ENCODE measurements at regions of chr5 and their contacts with region 1.

Region 1: DNA sequence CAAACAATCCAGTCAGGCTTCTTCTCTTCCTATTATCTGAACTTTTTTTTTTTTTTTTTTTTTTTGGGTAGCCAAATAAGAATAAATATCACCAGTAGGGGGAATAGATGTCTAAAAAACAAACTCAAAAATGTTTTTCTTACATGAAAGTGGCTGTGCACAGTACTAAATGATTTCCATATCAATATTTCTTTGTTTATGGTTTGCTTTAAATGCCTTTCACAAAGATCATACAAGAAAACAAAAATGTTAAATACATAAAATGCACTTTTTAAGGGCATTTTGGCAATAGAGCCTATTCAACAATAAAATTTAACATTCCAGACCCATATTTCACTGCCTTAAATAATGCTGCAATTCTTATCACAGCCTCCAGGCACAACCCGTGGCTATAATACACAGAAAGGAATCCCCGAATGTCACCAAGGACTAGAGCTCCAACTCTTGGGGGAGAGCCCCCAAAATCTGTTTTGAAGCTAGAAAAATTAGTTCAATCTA is 91.1 kb upstream of the TBCA start:
- DNase-seq: no peak
- H3K4me3 ChIP-seq: no peak overlapping the region
- H3K27ac ChIP-seq: no peak overlapping the region
- H3K4me1 ChIP-seq: no peaks in the 10 kb centered on the region
- H3K27me3 ChIP-seq: no peaks in the 10 kb centered on the region
- CTCF ChIP-seq: no peak
- POLR2A ChIP-seq: no peak

Region 2: GRCh38 chr5:77906806-77907205 is 39.6 kb after region 1 on chr5:
- intact Hi-C with region 1: no loop called
- DNase-seq: no peak
- H3K4me3 ChIP-seq: no peak overlapping the region
- H3K27ac ChIP-seq: no peak overlapping the region
- H3K4me1 ChIP-seq: no peaks in the 10 kb centered on the region
- H3K27me3 ChIP-seq: no peaks in the 10 kb centered on the region
- CTCF ChIP-seq: no peak
- POLR2A ChIP-seq: no peak

Region 3: GRCh38 chr5:78424665-78425064 is 557.4 kb after region 1 on chr5:
- intact Hi-C with region 1: loop called (anchors 10 kb)
- DNase-seq: no peak
- H3K4me3 ChIP-seq: no peak overlapping the region
- H3K27ac ChIP-seq: no peak overlapping the region
- H3K4me1 ChIP-seq: no peaks in the 10 kb centered on the region
- H3K27me3 ChIP-seq: no peaks in the 10 kb centered on the region
- CTCF ChIP-seq: no peak
- POLR2A ChIP-seq: no peak

Measured in breast epithelium (tissue), 4 donors.